IMR-90 (cell line): ENCODE measurements at regions of chr2 and their contacts with region 1.

Region 1: DNA sequence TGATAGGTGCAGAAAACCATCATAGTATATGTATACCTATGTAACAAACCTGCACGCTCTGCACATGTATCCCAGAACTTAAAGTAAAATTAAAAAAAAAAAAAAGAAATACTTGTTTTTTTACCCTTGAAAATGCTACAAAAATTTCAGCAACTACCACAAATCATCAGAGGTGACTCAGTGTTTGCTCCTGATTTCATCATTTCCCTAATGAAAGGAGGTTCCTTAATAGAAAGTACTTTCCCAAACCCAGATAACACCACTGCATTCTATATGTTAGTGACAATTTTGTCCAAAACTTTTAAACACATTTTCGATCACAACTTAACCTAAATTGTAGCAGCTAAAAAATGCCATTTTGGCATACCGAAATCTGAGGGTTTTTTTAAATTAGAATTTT is 163.3 kb downstream of the SLC39A10 start:
- DNase-seq: peak; percentile 77
- ATAC-seq: no peak
- H3K4me3 ChIP-seq: no peak overlapping the region
- H3K27ac ChIP-seq: no peak overlapping the region
- H3K4me1 ChIP-seq: peaks cover 9% of the 10 kb centered on the region
- H3K27me3 ChIP-seq: no peaks in the 10 kb centered on the region
- CTCF ChIP-seq: no peak
- POLR2A ChIP-seq: no peak
- RAD21 ChIP-seq: no peak

Region 2: GRCh38 chr2:195632856-195633572 is 187.4 kb before region 1 on chr2:
- CTCF ChIA-PET with region 1: no interaction called
- POLR2A ChIA-PET with region 1: no interaction called
- dilution Hi-C with region 1: no loop called
- in situ Hi-C with region 1: no loop called
- intact Hi-C with region 1: no loop called
- DNase-seq: no peak
- ATAC-seq: no peak
- H3K4me3 ChIP-seq: no peak overlapping the region
- H3K27ac ChIP-seq: no peak overlapping the region
- H3K4me1 ChIP-seq: no peaks in the 10 kb centered on the region
- H3K27me3 ChIP-seq: no peaks in the 10 kb centered on the region
- CTCF ChIP-seq: no peak
- POLR2A ChIP-seq: no peak
- RAD21 ChIP-seq: no peak

Region 3: DNA sequence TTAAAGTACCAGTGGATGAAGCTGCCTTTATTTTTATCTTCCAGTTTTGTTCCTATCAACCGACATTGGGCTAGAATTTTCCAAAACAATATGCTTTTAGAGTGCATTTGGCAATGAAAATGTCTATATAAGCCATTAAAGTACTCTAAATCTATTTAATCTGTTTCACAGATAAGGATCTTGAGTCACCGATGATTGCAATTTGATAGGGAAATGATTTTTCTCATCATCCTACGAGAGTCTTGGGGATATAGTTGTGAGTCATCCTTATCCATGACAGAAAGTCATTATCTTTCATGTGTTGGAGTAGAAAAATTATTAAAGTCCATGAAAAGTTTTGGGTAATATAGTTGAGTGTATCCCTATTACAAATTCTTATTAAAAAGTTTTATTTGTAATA is 137.2 kb before region 1 on chr2:
- CTCF ChIA-PET with region 1: no interaction called
- POLR2A ChIA-PET with region 1: no interaction called
- dilution Hi-C with region 1: no loop called
- in situ Hi-C with region 1: no loop called
- intact Hi-C with region 1: loop called (anchors 10 kb)
- DNase-seq: peak; percentile 72
- ATAC-seq: no peak
- H3K4me3 ChIP-seq: no peak overlapping the region
- H3K27ac ChIP-seq: no peak overlapping the region
- H3K4me1 ChIP-seq: no peaks in the 10 kb centered on the region
- H3K27me3 ChIP-seq: no peaks in the 10 kb centered on the region
- CTCF ChIP-seq: no peak
- POLR2A ChIP-seq: no peak
- RAD21 ChIP-seq: no peak

Region 4: GRCh38 chr2:195898505-195899191 is 78.3 kb after region 1 on chr2:
- CTCF ChIA-PET with region 1: interaction called, 3 read pairs
- POLR2A ChIA-PET with region 1: no interaction called
- dilution Hi-C with region 1: no loop called
- in situ Hi-C with region 1: no loop called
- intact Hi-C with region 1: loop called (anchors 5 kb)
- DNase-seq: peak; percentile 100
- ATAC-seq: peak; percentile 99
- H3K4me3 ChIP-seq: no peak overlapping the region
- H3K27ac ChIP-seq: peak overlapping the region; percentile 36; the same call in 1 of the 2 replicates
- H3K4me1 ChIP-seq: peaks cover 2% of the 10 kb centered on the region; the same call in 1 of the 2 replicates
- H3K27me3 ChIP-seq: no peaks in the 10 kb centered on the region
- CTCF ChIP-seq: no peak
- POLR2A ChIP-seq: no peak
- RAD21 ChIP-seq: 0 out of 2 replicates have a peak, but pooled peaks have one; percentile 6

Region 5: GRCh38 chr2:195937176-195937575 is 116.8 kb after region 1 on chr2:
- CTCF ChIA-PET with region 1: no interaction called
- POLR2A ChIA-PET with region 1: no interaction called
- dilution Hi-C with region 1: no loop called
- in situ Hi-C with region 1: no loop called
- intact Hi-C with region 1: no loop called
- DNase-seq: no peak
- ATAC-seq: no peak
- H3K4me3 ChIP-seq: no peak overlapping the region
- H3K27ac ChIP-seq: no peak overlapping the region
- H3K4me1 ChIP-seq: no peaks in the 10 kb centered on the region
- H3K27me3 ChIP-seq: no peaks in the 10 kb centered on the region
- CTCF ChIP-seq: no peak
- POLR2A ChIP-seq: no peak
- RAD21 ChIP-seq: no peak